B cell (primary cell): ENCODE measurements at regions of chr7 and their contacts with region 1.

Region 1: GRCh38 chr7:140479062-140479738 is at the start of gene MKRN1:
- DNase-seq: peak; percentile 94
- ATAC-seq: peak; percentile 88
- H3K4me3 ChIP-seq: peak within 1 kb of the TSS; percentile 90 to 96 (median 93)
- H3K4me3 Mint-ChIP-seq: peak within 1 kb of the TSS; percentile 91
- H3K27ac ChIP-seq: peak within 1 kb of the TSS; percentile 83 to 86
- H3K27ac Mint-ChIP-seq: peak within 1 kb of the TSS; percentile 99
- H3K4me1 ChIP-seq: peaks cover 26 to 27% of the 10 kb centered on the region in 2 donors
- H3K4me1 Mint-ChIP-seq: peaks cover 31% of the 10 kb centered on the region
- H3K27me3 ChIP-seq: no peaks in the 10 kb centered on the region
- H3K27me3 Mint-ChIP-seq: peaks cover 2% of the 10 kb centered on the region
- CTCF ChIP-seq: no peak
- total RNA-seq, gene MKRN1: 146 and 147 TPM in 2 replicates

Region 2: GRCh38 chr7:140062528-140063299 is 416.5 kb before region 1 on chr7 and contains the start of gene PARP12:
- CTCF ChIA-PET with region 1: no interaction called
- POLR2A ChIA-PET with region 1: no interaction called
- intact Hi-C with region 1: loop called (anchors 2 kb)
- DNase-seq: peak; percentile 96
- ATAC-seq: peak; percentile 86
- H3K4me3 ChIP-seq: peak within 1 kb of the TSS; percentile 67 to 89 (median 84)
- H3K4me3 Mint-ChIP-seq: peak within 1 kb of the TSS; percentile 98
- H3K27ac ChIP-seq: peak within 1 kb of the TSS; percentile 86 to 93
- H3K27ac Mint-ChIP-seq: peak within 1 kb of the TSS; percentile 99
- H3K4me1 ChIP-seq: peaks cover 32 to 38% of the 10 kb centered on the region in 2 donors
- H3K4me1 Mint-ChIP-seq: peaks cover 43% of the 10 kb centered on the region
- H3K27me3 ChIP-seq: no peaks in the 10 kb centered on the region
- H3K27me3 Mint-ChIP-seq: no peaks in the 10 kb centered on the region
- CTCF ChIP-seq: no peak
- total RNA-seq, gene PARP12: 160 and 177 TPM in 2 replicates

Region 3: DNA sequence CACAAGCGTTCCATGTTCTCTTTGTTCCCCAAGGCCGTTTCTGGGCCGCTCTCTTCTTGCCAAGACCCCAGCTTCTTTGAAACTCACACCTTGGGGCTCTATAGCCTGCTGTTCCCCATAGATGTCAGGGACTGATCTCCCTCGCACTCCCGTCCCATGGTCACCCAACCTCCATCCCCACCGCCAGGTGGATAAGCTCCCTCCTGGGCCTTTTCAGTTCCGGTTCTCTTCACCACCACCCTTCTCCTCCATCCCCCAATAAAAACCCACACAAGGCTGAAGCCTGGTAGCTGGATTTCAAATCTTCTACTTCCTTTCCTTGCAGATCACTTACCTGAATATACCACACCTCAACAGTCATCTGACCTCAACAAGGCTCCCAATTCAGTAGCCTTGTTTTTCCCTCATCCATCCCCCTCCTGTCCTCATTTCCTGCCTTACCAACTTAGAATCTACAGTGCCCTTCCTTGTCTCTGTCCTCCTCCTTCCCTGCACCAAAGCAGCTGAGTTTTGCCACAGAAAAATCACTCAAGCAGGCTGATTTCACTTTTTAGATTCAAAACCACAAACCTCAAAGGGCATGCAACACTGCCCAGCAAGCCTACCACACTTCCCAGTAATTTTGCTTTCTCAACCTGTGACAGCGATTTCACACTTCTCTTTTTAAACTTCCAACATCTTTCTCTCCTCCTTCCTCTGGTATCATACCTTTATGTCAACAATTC is 88.6 kb before region 1 on chr7:
- CTCF ChIA-PET with region 1: no interaction called
- POLR2A ChIA-PET with region 1: no interaction called
- intact Hi-C with region 1: loop called (anchors 1 kb)
- DNase-seq: peak; percentile 84
- ATAC-seq: peak; percentile 87
- H3K4me3 ChIP-seq: peak overlapping the region in 3 of 5 experiments; percentile 8 to 15 (median 13)
- H3K4me3 Mint-ChIP-seq: no peak overlapping the region
- H3K27ac ChIP-seq: no peak overlapping the region
- H3K27ac Mint-ChIP-seq: no peak overlapping the region
- H3K4me1 ChIP-seq: peaks cover 30 to 33% of the 10 kb centered on the region in 2 donors
- H3K4me1 Mint-ChIP-seq: peaks cover 9% of the 10 kb centered on the region
- H3K27me3 ChIP-seq: peaks cover 0 to 4% (median 0%) of the 10 kb centered on the region in 4 experiments
- H3K27me3 Mint-ChIP-seq: no peaks in the 10 kb centered on the region
- CTCF ChIP-seq: no peak

Region 4: GRCh38 chr7:140501966-140502365 is 22.8 kb after region 1 on chr7:
- CTCF ChIA-PET with region 1: no interaction called
- POLR2A ChIA-PET with region 1: no interaction called
- intact Hi-C with region 1: no loop called
- DNase-seq: no peak
- ATAC-seq: no peak
- H3K4me3 ChIP-seq: no peak overlapping the region
- H3K4me3 Mint-ChIP-seq: no peak overlapping the region
- H3K27ac ChIP-seq: no peak overlapping the region
- H3K27ac Mint-ChIP-seq: no peak overlapping the region
- H3K4me1 ChIP-seq: no peaks in the 10 kb centered on the region
- H3K4me1 Mint-ChIP-seq: no peaks in the 10 kb centered on the region
- H3K27me3 ChIP-seq: no peaks in the 10 kb centered on the region
- H3K27me3 Mint-ChIP-seq: peaks cover 3% of the 10 kb centered on the region
- CTCF ChIP-seq: no peak

Region 5: DNA sequence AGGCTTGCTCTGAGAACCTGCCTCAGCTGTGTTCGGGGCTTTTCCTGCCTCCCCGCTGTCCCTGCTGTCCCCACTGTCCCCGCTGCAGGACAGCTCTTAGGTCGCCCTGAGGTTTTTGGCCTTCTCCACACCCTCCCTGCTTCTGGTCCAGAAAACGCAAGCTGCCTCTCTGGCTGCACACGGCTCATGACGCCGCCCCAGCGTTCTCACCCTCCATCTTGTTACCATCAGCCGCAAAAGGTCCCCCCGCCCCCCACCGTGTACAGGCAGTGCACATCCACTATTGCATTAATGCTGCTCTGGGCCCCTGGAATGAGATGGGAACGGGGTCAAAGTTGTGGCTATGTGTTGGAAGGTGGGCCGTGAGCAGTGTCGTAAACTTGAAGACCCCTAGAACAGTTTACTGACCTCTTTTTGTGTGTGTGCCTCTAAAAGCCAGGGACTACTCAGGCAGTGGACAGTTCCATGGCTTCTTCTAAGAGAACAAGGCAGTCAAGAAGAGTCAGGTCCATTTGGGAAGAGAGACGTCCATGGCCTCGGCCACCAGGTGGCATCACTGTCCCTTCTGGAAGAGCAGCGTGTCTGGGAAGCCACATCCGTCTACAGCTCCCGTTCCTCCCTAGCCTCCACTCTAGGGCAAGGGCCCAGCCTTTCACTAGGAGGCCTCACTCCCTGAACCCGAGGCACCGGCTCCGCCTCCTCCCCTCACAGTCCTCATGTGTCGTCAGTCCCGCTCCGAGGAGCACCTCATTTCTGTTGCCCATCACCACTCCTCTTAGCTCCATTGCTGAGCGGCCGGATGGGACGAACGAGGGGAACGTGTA is 38.6 kb after region 1 on chr7:
- CTCF ChIA-PET with region 1: interaction called, 17 read pairs
- POLR2A ChIA-PET with region 1: no interaction called
- intact Hi-C with region 1: no loop called
- DNase-seq: peak; percentile 76
- ATAC-seq: peak; percentile 67
- H3K4me3 ChIP-seq: no peak overlapping the region
- H3K4me3 Mint-ChIP-seq: peak overlapping the region; percentile 62
- H3K27ac ChIP-seq: no peak overlapping the region
- H3K27ac Mint-ChIP-seq: no peak overlapping the region
- H3K4me1 ChIP-seq: peaks cover 0 to 5% of the 10 kb centered on the region in 2 donors
- H3K4me1 Mint-ChIP-seq: peaks cover 4% of the 10 kb centered on the region
- H3K27me3 ChIP-seq: peaks cover 0 to 3% (median 0%) of the 10 kb centered on the region in 4 experiments
- H3K27me3 Mint-ChIP-seq: peaks cover 21% of the 10 kb centered on the region
- CTCF ChIP-seq: peak; percentile 75

Region 6: GRCh38 chr7:140653319-140654108 is 174.3 kb after region 1 on chr7:
- CTCF ChIA-PET with region 1: interaction called, 26 read pairs
- POLR2A ChIA-PET with region 1: interaction called, 9 read pairs
- intact Hi-C with region 1: loop called (anchors 1 kb)
- DNase-seq: peak; percentile 72
- ATAC-seq: peak; percentile 46
- H3K4me3 ChIP-seq: no peak overlapping the region
- H3K4me3 Mint-ChIP-seq: peak overlapping the region; percentile 42
- H3K27ac ChIP-seq: no peak overlapping the region
- H3K27ac Mint-ChIP-seq: peak overlapping the region; percentile 8
- H3K4me1 ChIP-seq: peaks cover 15 to 19% of the 10 kb centered on the region in 2 donors
- H3K4me1 Mint-ChIP-seq: peaks cover 22% of the 10 kb centered on the region
- H3K27me3 ChIP-seq: no peaks in the 10 kb centered on the region
- H3K27me3 Mint-ChIP-seq: peaks cover 2% of the 10 kb centered on the region
- CTCF ChIP-seq: peak; percentile 91

Region 7: GRCh38 chr7:140696680-140697446 is 217.7 kb after region 1 on chr7 and contains the start of gene NDUFB2:
- CTCF ChIA-PET with region 1: no interaction called
- POLR2A ChIA-PET with region 1: interaction called, 4 read pairs
- intact Hi-C with region 1: loop called (anchors 1 kb)
- DNase-seq: peak; percentile 93
- ATAC-seq: peak; percentile 85
- H3K4me3 ChIP-seq: peak within 1 kb of the TSS; percentile 55 to 97 (median 94)
- H3K4me3 Mint-ChIP-seq: peak within 1 kb of the TSS; percentile 99
- H3K27ac ChIP-seq: peak within 1 kb of the TSS; percentile 84
- H3K27ac Mint-ChIP-seq: peak within 1 kb of the TSS; percentile 97
- H3K4me1 ChIP-seq: peaks cover 15 to 21% of the 10 kb centered on the region in 2 donors
- H3K4me1 Mint-ChIP-seq: peaks cover 37% of the 10 kb centered on the region
- H3K27me3 ChIP-seq: no peaks in the 10 kb centered on the region
- H3K27me3 Mint-ChIP-seq: no peaks in the 10 kb centered on the region
- CTCF ChIP-seq: no peak
- total RNA-seq, gene NDUFB2: 67.9 and 77.3 TPM in 2 replicates